ENCODE measurements at regions of chr15 and their contacts with region 1.

Region 1: DNA sequence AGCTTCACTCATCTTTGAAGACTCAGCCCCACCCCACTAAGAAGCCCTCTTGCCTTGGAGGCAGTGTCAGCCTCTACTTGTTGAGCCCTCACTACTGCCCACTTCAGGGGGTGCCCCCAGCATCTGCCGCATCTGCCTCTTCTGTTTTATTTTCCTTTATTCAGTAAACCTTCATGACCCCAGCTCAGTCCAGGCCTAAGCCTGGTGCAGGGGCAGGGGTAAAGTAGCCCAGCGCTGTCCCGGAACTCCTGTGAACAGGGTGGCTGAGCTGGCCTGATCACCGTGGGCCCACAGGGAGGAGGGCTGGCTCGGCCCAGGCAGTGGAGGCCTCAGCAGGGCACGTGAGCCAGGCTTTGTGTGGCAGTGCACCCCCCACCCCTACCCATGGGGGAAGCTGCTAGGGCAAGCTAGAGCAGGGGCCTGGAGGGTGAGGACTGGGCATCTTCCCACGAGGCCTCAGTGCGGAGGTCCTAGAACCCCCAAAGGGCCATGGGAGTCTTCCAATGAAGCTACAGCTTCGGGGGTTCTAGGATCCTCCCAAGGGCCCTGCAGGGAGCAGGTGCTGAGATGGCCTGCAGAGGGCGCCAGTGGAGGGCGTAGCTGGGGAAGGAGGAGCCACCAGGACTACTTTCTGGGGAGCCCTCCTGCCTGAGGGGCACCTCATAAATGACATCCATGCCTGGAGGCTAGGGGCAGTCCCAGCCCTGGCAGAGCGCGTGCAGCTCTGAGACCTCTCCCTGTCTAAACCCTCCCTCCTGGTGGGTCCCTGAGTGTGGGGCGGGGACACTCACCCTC is 36.0 kb downstream of the TSPAN3 start:
- DNase-seq: no peak
- ATAC-seq: no peak
- H3K4me3 ChIP-seq: no peak overlapping the region
- H3K27ac ChIP-seq: no peak overlapping the region
- H3K4me1 ChIP-seq: peaks cover 38% of the 10 kb centered on the region
- H3K27me3 ChIP-seq: peaks cover 1 to 3% of the 10 kb centered on the region in 2 experiments; a peak in 2 of 5 replicates
- CTCF ChIP-seq: peak; percentile 76
- EP300 ChIP-seq: no peak
- POLR2A ChIP-seq: no peak
- RAD21 ChIP-seq: no peak

Region 2: DNA sequence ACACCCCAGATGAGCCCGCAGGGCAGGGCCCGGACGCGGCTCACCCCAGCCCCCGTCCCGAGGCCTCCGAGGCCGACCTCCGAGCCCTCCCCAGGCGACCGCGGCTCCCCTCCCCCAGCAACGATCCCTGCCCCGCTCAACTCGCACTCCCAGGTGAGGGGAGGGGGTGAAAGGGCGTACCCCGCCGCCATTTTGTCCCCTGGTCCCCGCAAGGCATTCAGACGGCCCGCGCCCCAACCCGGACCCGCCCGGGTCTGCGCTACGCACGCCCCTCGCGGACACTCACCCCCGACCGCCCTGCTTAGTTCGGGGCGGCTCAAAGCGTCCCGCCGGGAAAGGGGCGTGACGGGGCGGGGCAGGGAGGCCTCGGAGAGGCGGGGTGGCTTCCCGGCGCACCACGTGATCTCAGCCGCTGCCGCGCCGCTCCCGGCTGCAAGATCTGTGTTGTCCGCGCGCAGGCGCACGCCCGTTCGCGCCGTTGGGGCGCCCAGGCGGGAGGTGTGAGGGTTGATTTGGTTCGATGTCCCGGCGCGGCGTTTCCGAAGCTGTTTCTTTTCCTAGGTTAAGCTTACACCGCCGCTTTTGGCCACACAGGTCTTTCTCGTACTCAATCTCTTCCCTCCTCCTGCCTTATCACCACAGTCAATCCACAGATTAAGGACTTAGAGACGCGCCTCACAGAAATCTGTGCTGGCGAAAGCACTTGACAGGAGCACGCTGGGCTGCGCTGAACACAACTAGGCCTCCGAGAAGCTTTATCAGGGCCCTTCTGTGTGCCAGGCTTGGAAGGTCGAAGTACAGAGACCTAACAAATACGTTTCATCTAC is 129.7 kb before region 1 on chr15 and contains the start of gene SCAPER:
- CTCF ChIA-PET with region 1: no interaction called
- POLR2A ChIA-PET with region 1: no interaction called
- in situ Hi-C with region 1: loop called (anchors 10 kb)
- intact Hi-C with region 1: loop called (anchors 5 kb)
- DNase-seq: peak; percentile 76
- ATAC-seq: peak; percentile 87
- H3K4me3 ChIP-seq: peak within 1 kb of the TSS; percentile 61 to 81 (median 81)
- H3K27ac ChIP-seq: peak within 1 kb of the TSS; percentile 70
- H3K4me1 ChIP-seq: peaks cover 43% of the 10 kb centered on the region
- H3K27me3 ChIP-seq: no peaks in the 10 kb centered on the region
- CTCF ChIP-seq: peak; percentile 4; the same call in 1 of the 2 replicates
- EP300 ChIP-seq: no peak
- POLR2A ChIP-seq: peak in 1 of 2 experiments; percentile 63; a peak in 2 of 4 replicates
- RAD21 ChIP-seq: no peak; the same call in 1 of the 2 replicates
- total RNA-seq, gene SCAPER: 7.6 and 10.5 TPM in 2 replicates

Region 3: GRCh38 chr15:77186594-77187011 is 151.7 kb after region 1 on chr15:
- CTCF ChIA-PET with region 1: no interaction called
- POLR2A ChIA-PET with region 1: no interaction called
- in situ Hi-C with region 1: no loop called
- intact Hi-C with region 1: no loop called
- DNase-seq: no peak
- ATAC-seq: peak; percentile 60; the same call in 2 of the 3 replicates
- H3K4me3 ChIP-seq: no peak overlapping the region
- H3K27ac ChIP-seq: no peak overlapping the region
- H3K4me1 ChIP-seq: peaks cover 30% of the 10 kb centered on the region
- H3K27me3 ChIP-seq: no peaks in the 10 kb centered on the region
- CTCF ChIP-seq: peak; percentile 52
- EP300 ChIP-seq: no peak
- POLR2A ChIP-seq: no peak
- RAD21 ChIP-seq: peak; percentile 49; the same call in 1 of the 2 replicates

Measured in HepG2 (cell line).